ENCODE measurements at regions of chr12 and their contacts with region 1.

Region 1: DNA sequence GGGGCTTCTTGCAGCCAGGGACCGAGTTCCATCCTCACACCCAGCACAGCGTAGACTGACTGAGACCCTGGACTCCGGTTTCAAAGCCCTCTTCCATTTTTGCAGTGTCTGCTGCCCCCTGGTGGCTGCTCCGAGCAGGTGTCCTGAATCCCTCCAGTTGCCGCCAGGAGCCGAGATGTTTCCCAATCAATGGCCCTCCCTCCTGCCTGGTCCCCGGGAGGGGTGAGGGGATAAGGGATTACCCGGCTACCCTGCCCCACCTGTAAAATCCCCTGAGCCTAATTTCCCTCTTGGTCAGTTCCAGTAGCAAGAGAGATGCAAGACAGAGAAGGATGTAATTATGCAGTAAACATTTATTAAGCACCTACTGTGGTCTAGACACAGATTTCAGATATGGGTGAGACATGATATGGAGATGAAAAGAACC is 55.0 kb downstream of the PHETA1 start:
- DNase-seq: peak; percentile 88
- H3K4me3 Mint-ChIP-seq: no peak overlapping the region
- H3K27ac Mint-ChIP-seq: no peak overlapping the region
- H3K4me1 Mint-ChIP-seq: no peaks in the 10 kb centered on the region
- H3K27me3 Mint-ChIP-seq: peaks cover 52% of the 10 kb centered on the region
- CTCF ChIP-seq: peak; percentile 96

Region 2: DNA sequence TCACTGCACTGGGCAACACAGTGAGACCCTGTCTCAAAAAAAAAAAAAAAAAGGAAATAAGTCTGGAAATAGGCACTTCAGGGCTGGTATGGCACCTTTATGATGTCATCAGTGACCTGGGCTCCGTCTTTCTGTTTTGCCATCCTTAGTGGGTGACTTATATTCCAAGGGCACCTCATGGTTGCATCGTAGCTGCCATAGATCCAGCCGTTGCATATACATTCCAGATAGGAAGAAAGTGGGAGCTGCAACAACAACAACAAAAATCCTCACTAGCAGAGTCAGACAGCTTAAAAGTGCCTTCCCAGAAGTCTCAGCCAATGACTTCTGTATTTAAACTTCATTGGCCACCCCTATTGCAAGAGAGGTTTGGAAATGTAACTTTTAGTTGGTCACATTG is 419.9 kb before region 1 on chr12:
- CTCF ChIA-PET with region 1: no interaction called
- intact Hi-C with region 1: loop called (anchors 5 kb)
- DNase-seq: no peak
- H3K4me3 Mint-ChIP-seq: no peak overlapping the region
- H3K27ac Mint-ChIP-seq: no peak overlapping the region
- H3K4me1 Mint-ChIP-seq: no peaks in the 10 kb centered on the region
- H3K27me3 Mint-ChIP-seq: peaks cover 65% of the 10 kb centered on the region
- CTCF ChIP-seq: no peak

Region 3: DNA sequence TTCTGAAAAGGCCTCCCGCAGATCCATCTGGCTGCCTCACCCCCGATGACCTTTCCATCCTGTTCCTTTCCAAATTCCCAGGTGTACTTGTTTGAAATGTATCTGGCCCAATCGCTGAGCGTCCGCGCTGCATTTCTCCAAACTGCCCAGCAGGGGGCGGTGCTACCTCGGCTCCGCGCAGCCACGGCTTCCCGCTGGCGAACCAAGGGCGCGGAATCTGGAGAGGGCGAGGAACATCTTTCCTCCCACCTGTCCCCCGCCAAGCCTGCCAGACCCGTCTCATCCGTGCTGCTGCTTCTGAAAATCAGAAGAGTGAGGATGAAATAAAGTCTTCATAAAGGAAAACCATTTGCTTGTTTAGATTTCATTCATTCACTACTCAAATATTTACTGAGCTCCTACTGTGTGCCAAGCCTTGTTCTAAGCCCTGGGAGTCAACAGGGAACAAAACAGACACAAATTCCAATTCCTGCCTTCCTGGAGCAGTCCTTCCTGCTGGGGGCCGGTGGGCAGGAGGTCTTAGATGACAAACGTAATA is 376.7 kb before region 1 on chr12:
- CTCF ChIA-PET with region 1: no interaction called
- intact Hi-C with region 1: loop called (anchors 5 kb)
- DNase-seq: peak; percentile 67
- H3K4me3 Mint-ChIP-seq: no peak overlapping the region
- H3K27ac Mint-ChIP-seq: no peak overlapping the region
- H3K4me1 Mint-ChIP-seq: peaks cover 10% of the 10 kb centered on the region
- H3K27me3 Mint-ChIP-seq: peaks cover 37% of the 10 kb centered on the region
- CTCF ChIP-seq: peak; percentile 96

Region 4: GRCh38 chr12:111024205-111024801 is 289.5 kb before region 1 on chr12:
- CTCF ChIA-PET with region 1: no interaction called
- intact Hi-C with region 1: loop called (anchors 1 kb)
- DNase-seq: peak; percentile 81
- H3K4me3 Mint-ChIP-seq: no peak overlapping the region
- H3K27ac Mint-ChIP-seq: no peak overlapping the region
- H3K4me1 Mint-ChIP-seq: peaks cover 7% of the 10 kb centered on the region
- H3K27me3 Mint-ChIP-seq: peaks cover 100% of the 10 kb centered on the region
- CTCF ChIP-seq: peak; percentile 88

Region 5: GRCh38 chr12:111138016-111138415 is 175.8 kb before region 1 on chr12:
- CTCF ChIA-PET with region 1: no interaction called
- intact Hi-C with region 1: no loop called
- DNase-seq: no peak
- H3K4me3 Mint-ChIP-seq: no peak overlapping the region
- H3K27ac Mint-ChIP-seq: no peak overlapping the region
- H3K4me1 Mint-ChIP-seq: no peaks in the 10 kb centered on the region
- H3K27me3 Mint-ChIP-seq: peaks cover 93% of the 10 kb centered on the region
- CTCF ChIP-seq: no peak

Measured in Calu3 (cell line).